ENCODE measurements at regions of chr3 and their contacts with region 1.

Region 1: DNA sequence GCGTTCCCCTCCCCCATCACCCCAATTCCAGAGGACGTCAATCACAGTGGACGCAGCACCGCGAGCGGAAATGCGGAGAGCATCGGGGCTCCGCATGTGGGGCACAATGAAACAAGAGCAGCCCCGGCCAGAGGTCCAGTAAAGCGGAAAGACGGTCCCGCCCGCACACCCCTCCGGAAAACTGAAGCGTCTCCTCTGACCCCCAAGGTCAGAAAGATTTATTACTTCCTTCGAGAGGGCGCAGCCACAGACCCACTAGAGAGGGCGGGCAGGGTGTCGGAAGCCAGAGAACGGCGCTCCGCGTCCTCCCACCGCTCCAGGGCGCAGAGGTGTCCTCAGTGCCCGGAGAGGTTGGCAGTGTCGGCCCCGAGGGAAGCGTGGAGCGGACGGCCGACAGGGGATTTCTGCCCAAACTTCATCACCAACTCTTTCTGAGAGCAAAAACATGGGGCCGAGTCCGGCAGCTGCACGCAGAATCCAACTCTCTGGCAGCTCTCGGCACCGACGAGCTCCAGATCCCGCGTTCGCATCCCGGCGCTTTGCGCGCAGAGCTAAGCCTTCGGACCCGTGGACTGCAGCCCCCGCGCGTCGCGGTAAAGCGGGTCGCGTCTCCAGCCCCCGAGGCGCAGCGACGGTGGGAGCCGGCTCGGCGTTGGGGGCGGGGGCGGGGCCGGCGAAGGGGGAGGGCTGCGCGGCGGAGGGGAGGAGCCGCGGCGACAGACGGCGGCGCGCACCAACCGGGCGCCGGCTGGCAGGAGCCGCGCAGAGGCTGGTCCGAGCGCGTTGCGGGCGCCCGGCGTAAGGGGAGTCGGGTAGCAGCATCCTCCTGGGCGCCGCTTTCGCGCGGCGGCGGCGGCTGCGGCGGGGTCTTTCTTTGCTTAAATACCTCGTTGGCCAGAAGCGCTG is at the start of gene CHST2:
- DNase-seq: no peak
- ATAC-seq: peak; percentile 86
- H3K4me3 ChIP-seq: peak within 1 kb of the TSS; percentile 94
- H3K27ac ChIP-seq: peak within 1 kb of the TSS; percentile 93
- H3K4me1 ChIP-seq: peaks cover 13% of the 10 kb centered on the region
- H3K27me3 ChIP-seq: no peaks in the 10 kb centered on the region
- CTCF ChIP-seq: no peak
- EP300 ChIP-seq: no peak
- POLR2A ChIP-seq: peak; percentile 63
- RAD21 ChIP-seq: no peak
- polyA plus RNA-seq, gene CHST2: 2.3 to 5.6 TPM

Region 2: GRCh38 chr3:143081844-143082778 is 37.2 kb before region 1 on chr3:
- CTCF ChIA-PET with region 1: interaction called, 3 read pairs
- POLR2A ChIA-PET with region 1: no interaction called
- RAD21 ChIA-PET with region 1: interaction called, 3 read pairs
- SMC1A ChIA-PET with region 1: interaction called, 3 read pairs
- in situ Hi-C with region 1: no loop called
- intact Hi-C with region 1: loop called (anchors 1 kb)
- DNase-seq: peak; percentile 94
- ATAC-seq: peak; percentile 81
- H3K4me3 ChIP-seq: peak overlapping the region; percentile 51; the same call in 1 of the 2 replicates
- H3K27ac ChIP-seq: peak overlapping the region; percentile 92
- H3K4me1 ChIP-seq: peaks cover 35% of the 10 kb centered on the region
- H3K27me3 ChIP-seq: no peaks in the 10 kb centered on the region
- CTCF ChIP-seq: no peak
- EP300 ChIP-seq: peak; percentile 91 to 93
- POLR2A ChIP-seq: peak; percentile 23
- RAD21 ChIP-seq: no peak

Region 3: GRCh38 chr3:143207338-143207961 is 88.2 kb after region 1 on chr3:
- CTCF ChIA-PET with region 1: interaction called, 3 read pairs
- POLR2A ChIA-PET with region 1: no interaction called
- RAD21 ChIA-PET with region 1: interaction called, 15 read pairs
- SMC1A ChIA-PET with region 1: interaction called, 17 read pairs
- in situ Hi-C with region 1: no loop called
- intact Hi-C with region 1: loop called (anchors 1 kb)
- DNase-seq: peak; percentile 95
- ATAC-seq: peak; percentile 96
- H3K4me3 ChIP-seq: no peak overlapping the region
- H3K27ac ChIP-seq: peak overlapping the region; percentile 62
- H3K4me1 ChIP-seq: peaks cover 27% of the 10 kb centered on the region
- H3K27me3 ChIP-seq: no peaks in the 10 kb centered on the region
- CTCF ChIP-seq: no peak
- EP300 ChIP-seq: peak in 1 of 2 experiments; percentile 44; a peak in 2 of 4 replicates
- POLR2A ChIP-seq: no peak
- RAD21 ChIP-seq: peak; percentile 13; the same call in 1 of the 2 replicates

Region 4: GRCh38 chr3:143302638-143303171 is 183.4 kb after region 1 on chr3:
- CTCF ChIA-PET with region 1: interaction called, 4 read pairs
- POLR2A ChIA-PET with region 1: no interaction called
- RAD21 ChIA-PET with region 1: interaction called, 3 read pairs
- SMC1A ChIA-PET with region 1: interaction called, 3 read pairs
- in situ Hi-C with region 1: no loop called
- intact Hi-C with region 1: loop called (anchors 5 kb)
- DNase-seq: no peak
- ATAC-seq: no peak
- H3K4me3 ChIP-seq: no peak overlapping the region
- H3K27ac ChIP-seq: no peak overlapping the region
- H3K4me1 ChIP-seq: peaks cover 8% of the 10 kb centered on the region
- H3K27me3 ChIP-seq: no peaks in the 10 kb centered on the region
- CTCF ChIP-seq: no peak
- EP300 ChIP-seq: no peak
- POLR2A ChIP-seq: no peak
- RAD21 ChIP-seq: no peak

Region 5: GRCh38 chr3:143414571-143415253 is 295.4 kb after region 1 on chr3:
- CTCF ChIA-PET with region 1: no interaction called
- POLR2A ChIA-PET with region 1: no interaction called
- RAD21 ChIA-PET with region 1: no interaction called
- SMC1A ChIA-PET with region 1: no interaction called
- in situ Hi-C with region 1: no loop called
- intact Hi-C with region 1: loop called (anchors 5 kb)
- DNase-seq: no peak
- ATAC-seq: peak; percentile 31
- H3K4me3 ChIP-seq: no peak overlapping the region
- H3K27ac ChIP-seq: no peak overlapping the region
- H3K4me1 ChIP-seq: peaks cover 28% of the 10 kb centered on the region
- H3K27me3 ChIP-seq: no peaks in the 10 kb centered on the region
- CTCF ChIP-seq: no peak
- EP300 ChIP-seq: no peak
- POLR2A ChIP-seq: no peak
- RAD21 ChIP-seq: no peak

Region 6: DNA sequence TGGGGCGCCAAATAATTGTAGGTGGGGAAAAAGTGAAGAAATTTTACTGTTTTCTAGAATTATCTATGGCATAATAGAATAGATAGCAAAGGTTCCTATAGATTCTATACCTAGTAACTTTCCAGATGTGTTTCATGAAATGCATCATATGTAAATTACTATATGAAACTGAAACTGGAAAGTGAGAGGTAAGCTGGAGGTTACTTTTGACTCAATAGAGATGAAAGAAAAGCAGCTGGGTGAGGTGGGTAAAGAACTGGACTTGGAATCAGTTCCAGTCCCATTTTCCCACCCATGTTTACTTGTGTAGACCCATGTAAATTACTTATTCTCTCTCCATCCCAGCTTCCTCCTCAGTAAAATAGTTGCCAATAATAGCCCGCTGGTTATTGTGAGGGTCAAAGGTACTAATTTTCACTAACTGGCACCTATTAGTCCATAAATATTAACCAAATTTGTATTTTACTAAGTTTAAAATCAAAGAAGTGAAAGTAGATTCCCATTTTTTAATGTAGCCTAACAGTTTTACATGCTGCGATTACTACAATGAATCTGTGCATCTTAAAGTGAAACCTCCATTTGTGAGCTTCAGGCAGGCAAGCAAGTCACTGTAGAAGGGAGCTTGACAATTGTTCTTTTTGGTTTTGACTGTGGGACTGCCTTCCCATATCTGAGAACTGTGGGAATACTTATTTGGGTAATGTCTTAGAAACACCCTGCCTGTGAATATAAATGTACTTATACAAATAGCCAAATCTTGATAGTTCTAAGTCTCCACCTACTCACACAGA is 416.9 kb after region 1 on chr3:
- CTCF ChIA-PET with region 1: no interaction called
- POLR2A ChIA-PET with region 1: no interaction called
- RAD21 ChIA-PET with region 1: no interaction called
- SMC1A ChIA-PET with region 1: no interaction called
- in situ Hi-C with region 1: no loop called
- intact Hi-C with region 1: loop called (anchors 10 kb)
- DNase-seq: peak; percentile 43
- ATAC-seq: peak; percentile 94
- H3K4me3 ChIP-seq: peak overlapping the region; percentile 41; the same call in 1 of the 2 replicates
- H3K27ac ChIP-seq: peak overlapping the region; percentile 45
- H3K4me1 ChIP-seq: peaks cover 29% of the 10 kb centered on the region
- H3K27me3 ChIP-seq: no peaks in the 10 kb centered on the region
- CTCF ChIP-seq: no peak
- EP300 ChIP-seq: peak; percentile 56 to 76; a peak in 3 of 4 replicates
- POLR2A ChIP-seq: no peak
- RAD21 ChIP-seq: no peak

Region 7: DNA sequence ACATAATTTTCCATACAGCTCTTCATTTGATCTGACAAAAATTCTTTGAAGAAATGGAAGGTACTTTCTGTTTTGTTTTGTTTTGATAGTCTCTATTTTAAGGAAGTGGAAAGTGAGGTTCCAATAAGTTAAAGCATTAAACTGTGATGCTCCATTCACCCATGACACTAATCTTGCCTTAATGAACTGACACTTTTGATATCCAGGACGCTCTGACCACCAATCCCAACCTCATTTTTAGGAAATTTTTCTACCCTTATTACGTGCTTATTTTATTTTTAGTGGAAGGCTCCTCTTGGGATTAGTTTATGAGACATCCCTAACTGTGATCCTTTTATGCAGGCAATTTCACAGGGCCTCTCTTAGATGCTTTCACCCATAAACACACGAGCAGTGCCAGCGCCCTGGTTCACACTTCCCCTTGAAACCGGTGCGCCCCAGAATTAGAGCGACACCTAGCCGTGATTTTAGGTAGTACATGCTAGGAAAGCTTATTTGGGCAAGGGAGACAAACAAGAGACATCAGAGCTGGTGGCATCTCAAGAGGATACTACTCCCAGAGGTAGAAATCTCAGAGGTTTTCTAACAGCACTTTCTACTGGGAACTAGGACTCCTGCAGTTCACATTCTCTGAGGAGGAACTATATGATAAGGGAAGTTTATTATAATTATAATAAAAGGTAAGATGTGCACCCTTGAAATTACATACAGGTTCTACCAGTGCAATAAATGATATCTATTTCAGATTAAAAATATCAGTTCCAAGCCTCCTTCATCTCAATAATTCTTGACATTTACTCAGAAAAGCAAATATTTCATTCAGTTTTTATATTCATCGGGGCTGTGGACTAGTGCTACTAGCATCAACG is 555.1 kb after region 1 on chr3:
- CTCF ChIA-PET with region 1: interaction called, 16 read pairs
- POLR2A ChIA-PET with region 1: no interaction called
- RAD21 ChIA-PET with region 1: interaction called, 10 read pairs
- SMC1A ChIA-PET with region 1: interaction called, 10 read pairs
- in situ Hi-C with region 1: loop called (anchors 5 kb)
- intact Hi-C with region 1: loop called (anchors 2 kb)
- DNase-seq: peak; percentile 76
- ATAC-seq: peak; percentile 89
- H3K4me3 ChIP-seq: 0 out of 2 replicates have a peak overlapping the region, but pooled peaks have one; percentile 39
- H3K27ac ChIP-seq: peak overlapping the region; percentile 81
- H3K4me1 ChIP-seq: peaks cover 10% of the 10 kb centered on the region
- H3K27me3 ChIP-seq: no peaks in the 10 kb centered on the region
- CTCF ChIP-seq: peak; percentile 89 to 96 (median 93)
- EP300 ChIP-seq: no peak
- POLR2A ChIP-seq: no peak
- RAD21 ChIP-seq: peak; percentile 100

Measured in GM12878 (cell line).